Cardiac septum (tissue), 1 donor: ENCODE measurements at regions of chr5 and their contacts with region 1.

Region 1: DNA sequence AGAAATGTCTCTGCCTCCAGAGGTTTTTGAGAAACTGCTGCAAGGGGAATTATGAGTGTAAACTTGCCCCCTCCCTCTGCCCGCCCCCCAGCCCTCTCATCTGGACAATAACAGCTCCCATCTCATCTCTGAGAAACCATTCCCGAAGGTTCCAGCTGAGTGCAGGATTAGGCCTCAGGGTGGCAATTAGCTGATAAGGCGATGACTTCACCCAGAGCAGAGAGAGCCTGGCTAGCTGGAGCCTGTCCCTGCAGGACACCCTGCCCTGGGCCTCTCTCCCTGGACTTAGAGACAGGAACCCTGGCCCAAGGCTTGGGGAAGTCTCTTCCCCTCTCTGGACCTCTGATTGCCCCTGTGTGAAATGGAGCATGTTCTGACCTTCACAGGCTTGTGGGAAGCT is 45.7 kb upstream of the HAND1 start:
- DNase-seq: peak; percentile 79

Region 2: GRCh38 chr5:154334406-154335064 is 189.2 kb before region 1 on chr5:
- intact Hi-C with region 1: no loop called
- DNase-seq: no peak

Region 3: DNA sequence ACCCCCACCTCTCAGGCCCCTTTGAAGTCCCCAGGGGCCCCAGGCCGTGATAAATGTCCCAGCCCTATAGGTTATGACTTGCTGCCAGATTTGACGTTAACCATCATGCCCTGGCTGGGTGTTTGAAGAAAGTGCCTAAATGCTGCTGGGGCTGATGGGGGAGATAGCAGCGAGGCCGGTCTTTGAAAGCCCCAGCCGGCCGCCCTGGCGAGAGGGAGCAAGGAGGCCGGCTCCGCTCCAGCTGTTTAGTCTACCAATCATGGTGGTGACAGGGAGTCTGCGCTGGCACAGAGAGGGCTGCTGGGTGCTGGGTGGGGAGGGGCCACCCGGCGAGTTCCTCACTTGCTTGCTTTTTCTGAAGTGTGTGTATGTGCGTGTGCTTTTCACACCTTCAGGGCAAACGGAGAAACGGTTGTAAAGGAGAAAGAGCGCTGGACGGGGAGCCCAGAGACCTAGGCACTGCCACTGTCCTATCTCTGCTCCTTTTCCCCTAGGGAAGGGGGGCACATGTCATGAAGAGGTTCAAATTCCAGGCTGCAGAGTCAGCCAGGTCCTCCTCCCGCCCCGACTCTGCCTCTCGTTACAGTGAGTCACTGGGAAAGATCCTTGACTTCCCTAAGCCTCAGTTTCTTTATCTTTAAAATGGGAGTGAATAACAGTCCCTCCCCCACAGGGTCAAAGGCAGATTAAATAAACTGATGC is 80.4 kb after region 1 on chr5:
- intact Hi-C with region 1: loop called (anchors 2 kb)
- DNase-seq: no peak

Region 4: DNA sequence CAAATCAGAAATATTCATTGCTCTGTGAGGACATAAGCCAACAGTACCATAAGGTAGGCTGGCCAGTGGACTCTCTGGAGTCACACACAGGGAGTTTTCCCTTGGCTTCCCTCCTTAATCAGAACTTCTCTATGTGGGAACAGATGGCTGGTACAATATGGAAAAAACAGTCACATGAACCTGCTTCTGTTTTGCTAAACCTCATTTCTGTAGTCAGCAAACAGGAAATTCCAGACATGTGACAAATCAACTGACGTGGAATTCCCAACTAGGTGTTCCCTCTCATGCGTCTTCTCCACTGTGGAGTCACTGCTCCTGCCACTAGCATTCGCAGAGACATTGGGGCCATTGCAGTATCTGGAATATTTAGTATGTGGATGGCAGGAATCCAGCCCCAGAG is 1107.4 kb after region 1 on chr5:
- intact Hi-C with region 1: no loop called
- DNase-seq: no peak